Common myeloid progenitor, CD34-positive (primary cell): ENCODE measurements at regions of chrX and their contacts with region 1.

Region 1: GRCh38 chrX:136168929-136169735 is 21.8 kb downstream of the FHL1 start:
- DNase-seq: peak; percentile 90 to 97 (median 96)
- H3K4me3 ChIP-seq: peak overlapping the region in 1 of 7 experiments; percentile 23
- H3K27ac ChIP-seq: peak overlapping the region; percentile 70 to 81
- H3K4me1 ChIP-seq: peaks cover 0 to 25% (median 14%) of the 10 kb centered on the region in 4 experiments
- H3K27me3 ChIP-seq: no peaks in the 10 kb centered on the region

Region 2: GRCh38 chrX:136209016-136209738 is 40.0 kb after region 1 on chrX:
- CTCF ChIA-PET with region 1: interaction called, 15 read pairs
- POLR2A ChIA-PET with region 1: no interaction called
- DNase-seq: peak; percentile 62 to 81 (median 78)
- H3K4me3 ChIP-seq: peak overlapping the region in 2 of 7 experiments; percentile 8 to 10
- H3K27ac ChIP-seq: peak overlapping the region in 1 of 2 experiments; percentile 60
- H3K4me1 ChIP-seq: peaks cover 6 to 74% (median 32%) of the 10 kb centered on the region in 4 experiments
- H3K27me3 ChIP-seq: peaks cover 0 to 7% (median 0%) of the 10 kb centered on the region in 5 experiments

Region 3: DNA sequence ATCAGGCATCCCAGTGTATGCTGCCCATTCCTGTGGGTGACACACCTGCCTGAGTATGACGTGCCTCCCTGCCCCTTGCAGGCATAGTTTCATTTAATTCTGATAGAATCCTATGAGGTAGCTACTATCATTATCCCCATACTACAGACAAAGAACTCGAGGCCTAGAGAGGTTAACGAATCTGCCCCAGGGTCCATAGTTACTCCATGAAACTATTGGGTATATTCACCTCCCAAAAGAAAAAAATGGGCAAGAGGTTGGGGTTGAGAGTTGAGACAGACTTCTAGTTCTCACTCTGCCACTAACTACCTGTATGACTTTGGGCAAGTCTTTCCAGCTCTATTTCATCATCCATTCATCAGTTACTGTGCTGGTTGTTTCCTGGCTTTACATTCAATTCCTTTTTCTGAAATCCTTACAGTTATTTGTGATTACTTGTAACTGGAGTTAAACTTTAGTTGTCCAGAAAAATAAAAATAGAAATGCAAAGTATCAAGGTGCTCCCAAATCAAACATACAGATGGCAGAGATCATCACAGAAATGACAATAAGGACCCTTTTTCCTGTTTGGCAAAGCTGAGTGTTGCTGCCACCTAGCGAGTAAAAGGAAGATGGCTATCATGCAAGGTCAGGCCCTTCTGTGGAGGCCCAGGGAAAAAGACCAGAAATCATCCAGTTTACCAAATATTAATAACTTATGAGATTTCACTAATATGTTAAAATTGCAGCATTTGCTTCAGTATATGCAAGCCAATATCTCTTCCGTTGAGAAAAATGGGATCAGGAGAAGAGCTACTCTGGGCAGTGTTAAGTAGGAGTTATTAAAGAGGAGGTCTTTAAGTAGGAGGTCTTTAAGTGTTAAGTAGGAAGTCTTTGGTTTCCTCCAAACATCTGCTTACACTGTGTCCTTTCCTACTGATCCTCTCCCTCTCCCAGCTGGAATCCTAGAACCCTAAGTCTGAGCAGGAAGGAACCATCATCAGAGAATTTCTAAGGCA is 99.2 kb after region 1 on chrX:
- CTCF ChIA-PET with region 1: interaction called, 10 read pairs
- POLR2A ChIA-PET with region 1: no interaction called
- DNase-seq: peak; percentile 38 to 70 (median 67)
- H3K4me3 ChIP-seq: no peak overlapping the region
- H3K27ac ChIP-seq: no peak overlapping the region
- H3K4me1 ChIP-seq: peaks cover 0 to 29% (median 16%) of the 10 kb centered on the region in 4 experiments
- H3K27me3 ChIP-seq: no peaks in the 10 kb centered on the region